ENCODE measurements at regions of chr16 and their contacts with region 1.

Region 1: DNA sequence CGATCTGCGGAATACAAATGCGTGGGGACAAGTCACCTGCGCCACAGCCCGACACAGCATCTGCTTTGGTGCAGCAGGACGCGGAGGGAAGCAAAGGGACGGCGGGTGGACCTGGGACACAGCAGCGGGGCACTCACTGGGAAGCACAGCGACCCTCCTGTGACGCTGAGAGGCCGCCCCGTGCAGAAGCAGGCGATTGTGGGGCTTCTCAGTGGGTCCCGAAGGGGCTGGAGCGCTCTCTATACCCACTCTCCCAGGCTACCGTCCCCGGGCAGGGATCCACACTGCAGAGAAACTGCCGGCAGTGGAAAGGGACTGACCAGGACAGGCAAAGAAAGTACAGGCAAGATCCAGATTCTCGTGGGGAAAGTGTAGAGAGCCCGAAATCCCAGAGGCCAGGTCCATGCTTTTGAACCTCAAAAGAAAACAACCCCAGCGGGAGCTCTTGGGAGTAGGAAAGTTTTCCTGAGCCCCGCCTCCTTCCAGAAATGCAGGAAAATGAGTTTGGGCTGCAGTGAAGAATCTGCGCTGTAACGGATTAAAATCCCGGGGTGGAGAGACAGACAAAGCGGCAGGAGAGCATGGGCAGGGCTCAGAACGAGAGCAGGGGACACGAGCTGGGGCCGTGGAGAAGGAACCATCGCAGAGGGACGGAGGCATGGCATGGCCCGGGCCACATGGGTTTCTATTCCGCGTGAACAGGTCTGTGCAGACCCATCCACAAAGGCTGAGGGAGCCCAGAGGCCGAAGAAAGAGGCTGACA is 12.7 kb downstream of the COX4I1 start:
- DNase-seq: no peak
- ATAC-seq: peak; percentile 23 to 31; a peak in 4 of 6 replicates
- H3K4me3 ChIP-seq: no peak overlapping the region
- H3K27ac ChIP-seq: no peak overlapping the region
- H3K4me1 ChIP-seq: no peaks in the 10 kb centered on the region
- CTCF ChIP-seq: no peak
- EP300 ChIP-seq: no peak
- POLR2A ChIP-seq: no peak
- RAD21 ChIP-seq: no peak

Region 2: GRCh38 chr16:85794696-85795095 is 17.5 kb before region 1 on chr16:
- CTCF ChIA-PET with region 1: no interaction called
- POLR2A ChIA-PET with region 1: no interaction called
- DNase-seq: no peak
- ATAC-seq: no peak
- H3K4me3 ChIP-seq: no peak overlapping the region
- H3K27ac ChIP-seq: no peak overlapping the region
- H3K4me1 ChIP-seq: peaks cover 12% of the 10 kb centered on the region
- CTCF ChIP-seq: no peak
- EP300 ChIP-seq: no peak
- POLR2A ChIP-seq: no peak
- RAD21 ChIP-seq: no peak

Region 3: DNA sequence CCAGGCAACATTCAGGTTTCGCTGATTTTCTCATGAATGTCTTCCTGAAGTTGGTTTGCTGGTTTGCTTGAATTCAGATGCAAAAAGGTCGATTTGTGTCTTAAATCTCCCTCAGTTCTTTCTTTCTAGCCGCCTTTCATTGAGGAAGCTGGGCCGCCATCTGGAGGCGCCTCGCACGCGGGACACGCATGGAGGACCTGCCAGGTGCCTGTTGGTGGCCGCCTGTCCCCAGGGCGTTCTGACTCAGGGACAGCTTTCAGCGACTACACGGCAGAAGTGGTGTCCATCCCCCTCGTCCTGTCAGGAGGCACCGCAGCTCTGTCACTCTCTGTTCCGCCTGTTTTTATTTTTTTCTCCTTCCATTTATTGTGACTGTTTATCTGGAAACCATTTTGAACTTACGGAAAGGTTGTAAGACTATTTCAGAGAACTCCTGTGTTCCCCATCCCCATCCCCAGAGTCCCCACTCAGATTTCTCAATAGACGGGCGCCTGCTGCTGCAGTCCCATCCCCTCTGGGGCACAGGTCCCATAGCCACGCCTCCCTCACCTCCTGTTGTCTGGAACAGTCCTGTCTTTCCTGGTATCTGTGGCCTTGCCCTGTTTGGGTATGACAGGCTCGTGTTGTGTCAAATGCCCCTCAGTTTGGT is 20.5 kb after region 1 on chr16:
- CTCF ChIA-PET with region 1: no interaction called
- POLR2A ChIA-PET with region 1: no interaction called
- DNase-seq: no peak
- ATAC-seq: no peak
- H3K4me3 ChIP-seq: no peak overlapping the region
- H3K27ac ChIP-seq: no peak overlapping the region
- H3K4me1 ChIP-seq: no peaks in the 10 kb centered on the region
- CTCF ChIP-seq: no peak
- EP300 ChIP-seq: no peak
- POLR2A ChIP-seq: no peak
- RAD21 ChIP-seq: no peak

Region 4: GRCh38 chr16:85986931-85987749 is 174.9 kb after region 1 on chr16:
- CTCF ChIA-PET with region 1: interaction called, 345 read pairs
- POLR2A ChIA-PET with region 1: no interaction called
- DNase-seq: no peak
- ATAC-seq: peak in 1 of 2 experiments; percentile 62; a peak in 3 of 6 replicates
- H3K4me3 ChIP-seq: no peak overlapping the region
- H3K27ac ChIP-seq: no peak overlapping the region
- H3K4me1 ChIP-seq: no peaks in the 10 kb centered on the region
- CTCF ChIP-seq: peak; percentile 50
- EP300 ChIP-seq: no peak
- POLR2A ChIP-seq: no peak
- RAD21 ChIP-seq: peak; percentile 48 to 83